ENCODE measurements at regions of chr11 and their contacts with region 1.

Region 1: GRCh38 chr11:124837491-124837856 is 27.8 kb upstream of the ROBO3 start:
- DNase-seq: peak; percentile 83 to 87 (median 85)
- H3K4me3 ChIP-seq: no peak overlapping the region
- H3K27ac ChIP-seq: no peak overlapping the region
- H3K4me1 ChIP-seq: peaks cover 0 to 21% (median 16%) of the 10 kb centered on the region in 4 experiments
- H3K27me3 ChIP-seq: peaks cover 30 to 52% (median 37%) of the 10 kb centered on the region in 5 experiments

Region 2: GRCh38 chr11:124662106-124662505 is 175.4 kb before region 1 on chr11:
- CTCF ChIA-PET with region 1: interaction called, 34 read pairs
- POLR2A ChIA-PET with region 1: no interaction called
- DNase-seq: no peak
- H3K4me3 ChIP-seq: no peak overlapping the region
- H3K27ac ChIP-seq: no peak overlapping the region
- H3K4me1 ChIP-seq: no peaks in the 10 kb centered on the region
- H3K27me3 ChIP-seq: no peaks in the 10 kb centered on the region

Region 3: DNA sequence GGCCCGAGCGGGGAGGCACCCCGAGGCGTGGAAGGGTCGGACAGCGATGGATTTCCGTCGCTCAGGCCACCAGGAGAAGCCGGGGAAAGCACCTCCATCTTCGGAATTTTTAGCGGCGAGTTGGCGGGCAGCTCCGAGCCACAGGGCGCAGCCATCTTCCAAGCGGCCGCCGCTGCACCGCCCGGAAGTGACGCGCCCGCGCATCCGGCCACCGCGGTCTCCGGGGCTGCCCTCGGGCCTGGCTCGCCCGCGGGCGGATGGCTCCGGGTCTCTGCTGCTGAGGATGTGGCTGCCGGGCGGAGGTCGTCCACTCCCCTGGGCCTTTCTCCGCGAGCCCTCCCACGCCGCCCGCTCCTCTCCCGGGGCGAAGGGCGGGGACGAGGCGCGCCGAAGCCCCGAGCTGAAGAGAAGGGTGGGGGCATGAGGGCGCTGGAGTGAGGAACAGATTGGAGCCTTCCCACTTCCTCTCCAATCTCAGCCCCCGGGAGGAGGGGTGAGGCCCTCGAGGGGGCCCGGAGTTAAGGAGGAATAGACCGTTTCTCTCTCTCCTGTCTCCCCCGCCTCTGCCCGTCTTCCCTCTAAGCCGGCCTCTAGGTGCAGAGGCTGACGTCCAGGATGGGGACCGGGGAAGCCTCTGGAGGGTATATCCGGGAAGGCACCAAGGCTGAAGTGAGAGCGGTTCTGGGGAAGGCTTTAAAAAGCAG is 37.1 kb before region 1 on chr11 and contains the start of gene MSANTD2:
- CTCF ChIA-PET with region 1: interaction called, 16 read pairs
- POLR2A ChIA-PET with region 1: no interaction called
- DNase-seq: peak; percentile 65 to 82 (median 74)
- H3K4me3 ChIP-seq: peak within 1 kb of the TSS; percentile 72 to 85 (median 81)
- H3K27ac ChIP-seq: peak within 1 kb of the TSS in 1 of 2 experiments; percentile 68
- H3K4me1 ChIP-seq: peaks cover 11 to 18% (median 15%) of the 10 kb centered on the region in 4 experiments
- H3K27me3 ChIP-seq: peaks cover 0 to 20% (median 16%) of the 10 kb centered on the region in 5 experiments

Region 4: DNA sequence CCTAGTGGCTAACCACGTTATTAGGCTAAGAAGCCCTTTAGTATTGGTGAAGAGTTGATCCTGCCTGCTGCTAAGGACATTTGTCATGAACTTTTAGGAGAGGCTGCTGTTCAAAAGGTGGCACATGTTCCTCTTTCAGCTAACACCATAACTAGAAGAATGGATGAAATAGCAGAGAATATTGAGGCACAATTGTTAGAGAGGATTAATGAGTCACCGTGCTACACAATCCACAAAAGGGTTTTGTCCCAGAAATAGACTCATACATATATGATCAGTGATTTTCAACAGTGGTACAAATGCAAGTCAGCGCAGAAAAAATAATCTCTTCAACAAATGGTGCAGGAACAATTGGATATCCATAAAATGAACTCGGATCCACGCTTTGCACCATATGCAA is 30.3 kb before region 1 on chr11:
- CTCF ChIA-PET with region 1: interaction called, 13 read pairs
- POLR2A ChIA-PET with region 1: no interaction called
- DNase-seq: no peak
- H3K4me3 ChIP-seq: no peak overlapping the region
- H3K27ac ChIP-seq: no peak overlapping the region
- H3K4me1 ChIP-seq: no peaks in the 10 kb centered on the region
- H3K27me3 ChIP-seq: peaks cover 3 to 56% (median 17%) of the 10 kb centered on the region in 5 experiments

Region 5: DNA sequence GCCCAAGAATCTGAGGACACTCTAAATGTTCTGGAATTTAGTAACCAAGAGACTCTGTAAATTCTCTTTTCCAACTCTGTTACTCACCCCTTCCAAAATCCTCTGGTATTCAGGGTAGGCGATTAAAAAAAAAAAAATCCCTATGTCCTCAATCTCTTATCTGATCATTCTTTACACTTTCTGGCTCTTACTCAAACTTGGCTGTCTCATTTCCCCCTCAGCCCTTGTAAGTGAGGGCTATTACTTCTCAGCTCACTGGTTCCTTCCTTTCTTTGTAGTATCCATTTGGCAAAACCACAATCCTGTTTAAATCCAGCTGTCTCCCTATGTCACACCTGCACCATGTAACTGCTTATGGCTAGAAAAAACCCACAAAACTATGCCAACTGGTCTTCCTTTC is 24.6 kb before region 1 on chr11:
- CTCF ChIA-PET with region 1: interaction called, 15 read pairs
- POLR2A ChIA-PET with region 1: no interaction called
- DNase-seq: no peak
- H3K4me3 ChIP-seq: no peak overlapping the region
- H3K27ac ChIP-seq: no peak overlapping the region
- H3K4me1 ChIP-seq: no peaks in the 10 kb centered on the region
- H3K27me3 ChIP-seq: peaks cover 3 to 54% (median 9%) of the 10 kb centered on the region in 5 experiments

Region 6: DNA sequence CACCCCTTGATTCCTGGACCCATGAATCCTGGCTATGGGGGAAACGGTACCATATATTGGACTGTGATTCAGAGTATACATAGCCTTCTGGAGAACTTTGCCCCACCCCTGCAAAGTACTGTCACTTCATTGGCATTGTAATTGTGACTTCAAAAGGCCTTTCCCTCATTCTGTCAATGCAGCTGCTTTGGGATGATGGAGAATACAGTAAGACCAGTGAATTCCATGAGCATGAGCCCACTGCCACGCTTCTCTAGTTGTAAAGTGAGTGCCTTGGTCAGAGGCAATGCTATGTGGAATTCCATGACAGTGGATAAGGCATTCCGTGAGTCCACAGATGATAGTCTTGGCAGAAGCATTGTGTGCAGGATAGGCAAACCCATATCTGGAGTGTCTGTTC is 11.6 kb before region 1 on chr11:
- CTCF ChIA-PET with region 1: interaction called, 10 read pairs
- POLR2A ChIA-PET with region 1: interaction called, 3 read pairs
- DNase-seq: no peak
- H3K4me3 ChIP-seq: no peak overlapping the region
- H3K27ac ChIP-seq: no peak overlapping the region
- H3K4me1 ChIP-seq: no peaks in the 10 kb centered on the region
- H3K27me3 ChIP-seq: peaks cover 0 to 7% (median 0%) of the 10 kb centered on the region in 5 experiments

Measured in common myeloid progenitor, CD34-positive (primary cell).